HEK293 (cell line): ENCODE measurements at regions of chr11 and their contacts with region 1.

Region 1: GRCh38 chr11:113730887-113731726 is 25.0 kb upstream of the TMPRSS5 start:
- H3K4me3 ChIP-seq: no peak overlapping the region
- H3K27ac ChIP-seq: no peak overlapping the region
- H3K4me1 ChIP-seq: no peaks in the 10 kb centered on the region
- CTCF ChIP-seq: peak; percentile 72

Region 2: DNA sequence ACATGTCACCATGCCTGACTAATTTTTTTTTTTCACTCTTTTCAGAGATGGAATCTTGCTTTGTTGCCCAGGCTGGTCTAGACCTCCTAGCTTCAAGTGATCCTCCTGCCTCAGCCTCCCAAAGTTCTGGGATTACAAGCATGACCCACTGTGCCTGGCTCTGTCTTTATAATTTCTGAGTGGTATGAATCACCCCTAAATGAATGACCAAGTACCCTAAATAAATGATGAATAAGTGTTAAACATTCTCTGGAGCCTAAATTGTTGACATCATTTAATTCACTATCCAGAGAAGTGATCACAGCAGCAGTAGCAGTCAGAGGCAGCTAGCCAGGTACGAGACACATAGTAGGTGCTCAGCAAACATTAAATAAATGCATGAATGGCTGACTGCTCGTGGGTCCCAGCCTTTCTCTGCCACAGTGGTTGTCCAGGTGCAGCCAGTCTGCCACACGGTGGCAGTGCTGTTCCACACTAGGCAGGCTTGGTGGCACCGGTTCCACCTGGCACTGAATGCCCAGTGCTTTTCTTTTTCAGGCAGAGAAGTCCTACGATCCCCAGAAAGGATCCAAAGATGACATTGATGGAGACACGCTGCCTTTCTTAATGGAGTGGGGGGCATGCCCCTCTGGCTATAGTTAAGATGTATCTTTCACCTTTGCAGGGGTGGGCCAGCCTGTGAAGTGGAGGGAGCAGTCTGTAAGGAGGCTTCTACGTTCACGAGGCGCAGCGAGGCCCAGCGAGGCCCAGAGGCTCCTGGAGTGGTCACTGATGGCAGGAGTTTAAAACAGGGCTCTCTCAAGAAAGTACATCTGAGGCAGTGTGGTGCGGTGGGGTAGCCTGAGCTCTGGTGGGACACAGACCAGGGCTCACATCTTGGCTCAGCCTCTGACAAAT is 425.4 kb before region 1 on chr11:
- CTCF ChIA-PET with region 1: interaction called, 68 read pairs
- POLR2A ChIA-PET with region 1: no interaction called
- H3K4me3 ChIP-seq: no peak overlapping the region
- H3K27ac ChIP-seq: no peak overlapping the region
- H3K4me1 ChIP-seq: no peaks in the 10 kb centered on the region
- CTCF ChIP-seq: peak; percentile 82

Region 3: DNA sequence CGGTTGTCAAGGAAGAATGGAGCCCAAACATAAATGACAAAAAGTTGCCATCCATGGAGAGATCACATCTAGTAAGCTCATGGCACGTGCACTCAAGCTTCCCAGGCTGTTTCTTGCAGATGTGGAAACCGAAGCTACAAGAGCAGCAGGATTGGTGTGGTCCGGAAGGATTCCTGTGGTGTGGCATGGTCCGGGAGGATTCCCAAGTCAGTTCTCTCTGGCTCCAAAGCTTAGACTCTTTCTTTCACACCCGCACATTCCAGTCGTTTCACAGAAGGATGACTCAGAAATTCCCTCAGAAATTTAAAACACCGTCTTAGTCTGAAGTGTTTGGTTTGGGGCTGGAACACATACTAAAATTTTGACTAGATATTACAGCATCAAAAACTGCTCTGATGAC is 177.9 kb before region 1 on chr11:
- CTCF ChIA-PET with region 1: interaction called, 20 read pairs
- POLR2A ChIA-PET with region 1: no interaction called
- H3K4me3 ChIP-seq: no peak overlapping the region
- H3K27ac ChIP-seq: no peak overlapping the region
- H3K4me1 ChIP-seq: no peaks in the 10 kb centered on the region
- CTCF ChIP-seq: no peak